ENCODE measurements at regions of chr5 and their contacts with region 1.

Region 1: DNA sequence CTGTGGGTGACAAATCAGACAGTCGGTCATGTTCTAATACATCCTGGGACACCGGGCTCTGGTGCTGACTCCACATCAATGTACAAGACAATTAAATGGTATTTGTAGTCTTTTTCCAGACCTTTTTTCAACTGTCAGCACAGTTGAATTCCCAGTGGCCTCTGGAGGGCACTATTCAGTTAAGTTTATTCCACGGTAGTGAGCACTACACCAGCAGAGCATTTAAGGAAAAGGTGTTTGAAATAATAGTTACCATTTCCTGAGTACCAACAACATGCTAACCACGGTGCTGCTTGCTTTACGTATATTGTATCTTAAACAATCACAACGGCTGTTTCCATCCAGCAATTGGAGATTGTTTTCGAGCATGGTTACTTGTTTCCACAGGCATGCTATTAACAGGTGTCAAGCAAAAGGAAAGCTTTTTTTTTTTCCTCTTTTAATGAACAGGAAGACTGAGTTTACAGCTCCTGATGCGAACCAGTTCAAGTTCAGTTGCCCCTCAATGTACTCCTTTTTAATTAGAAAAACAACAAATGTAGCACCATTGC is 186.7 kb downstream of the PDZD2 start:
- DNase-seq: no peak
- ATAC-seq: peak; percentile 60
- H3K4me3 ChIP-seq: no peak overlapping the region
- H3K27ac ChIP-seq: no peak overlapping the region
- H3K4me1 ChIP-seq: no peaks in the 10 kb centered on the region
- H3K27me3 ChIP-seq: no peaks in the 10 kb centered on the region

Region 2: GRCh38 chr5:31556461-31556860 is 269.1 kb before region 1 on chr5:
- intact Hi-C with region 1: no loop called
- DNase-seq: no peak
- ATAC-seq: no peak
- H3K4me3 ChIP-seq: no peak overlapping the region
- H3K27ac ChIP-seq: no peak overlapping the region
- H3K4me1 ChIP-seq: no peaks in the 10 kb centered on the region
- H3K27me3 ChIP-seq: no peaks in the 10 kb centered on the region

Region 3: GRCh38 chr5:32076699-32077695 is 251.4 kb after region 1 on chr5:
- intact Hi-C with region 1: loop called (anchors 1 to 5 kb)
- DNase-seq: no peak
- ATAC-seq: no peak
- H3K4me3 ChIP-seq: no peak overlapping the region
- H3K27ac ChIP-seq: no peak overlapping the region
- H3K4me1 ChIP-seq: no peaks in the 10 kb centered on the region
- H3K27me3 ChIP-seq: no peaks in the 10 kb centered on the region

Region 4: DNA sequence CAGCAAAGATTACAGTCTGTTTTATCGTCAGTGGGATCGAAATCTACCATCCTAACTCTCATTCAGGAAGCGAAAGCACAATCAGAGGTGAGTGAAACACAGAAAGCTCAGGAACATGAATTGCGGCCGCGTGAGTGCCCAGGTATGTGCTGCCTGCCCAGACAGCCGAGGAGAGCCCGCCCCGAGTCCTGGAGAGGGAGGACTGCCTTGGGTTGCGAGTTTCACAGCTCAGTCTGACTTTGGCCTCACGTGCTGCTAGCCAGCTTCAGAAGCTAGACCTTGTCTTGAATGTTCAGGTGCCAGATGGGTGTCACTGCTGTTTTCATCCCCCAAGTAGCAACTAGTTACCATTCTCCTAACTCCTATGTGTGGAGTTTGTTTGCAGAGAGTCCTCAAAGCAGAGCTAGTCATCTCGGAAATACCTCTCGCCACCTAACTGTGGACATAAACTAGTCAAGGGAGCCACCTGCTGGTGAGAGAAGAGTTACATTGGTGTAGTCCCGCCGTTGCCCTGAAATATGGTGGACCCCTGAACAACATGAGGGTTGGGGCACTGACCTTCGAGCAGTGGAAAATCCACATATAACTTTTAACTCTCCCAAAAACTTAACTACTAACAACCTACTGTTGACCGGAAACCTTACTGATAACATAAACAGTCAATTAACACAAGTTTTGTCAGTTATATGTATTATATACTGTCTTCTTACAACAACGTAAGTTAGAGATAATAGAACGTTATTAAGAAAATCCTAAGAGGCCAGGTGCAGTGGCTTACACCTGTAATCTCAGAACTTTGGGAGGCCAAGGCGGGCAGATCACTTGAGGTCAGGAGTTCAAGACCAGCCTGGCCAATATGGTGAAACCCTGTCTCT is 267.6 kb after region 1 on chr5:
- intact Hi-C with region 1: loop called in 1 of 2 experiments (anchors 5 kb)
- DNase-seq: no peak
- ATAC-seq: peak; percentile 82
- H3K4me3 ChIP-seq: no peak overlapping the region
- H3K27ac ChIP-seq: no peak overlapping the region
- H3K4me1 ChIP-seq: no peaks in the 10 kb centered on the region
- H3K27me3 ChIP-seq: no peaks in the 10 kb centered on the region